Psoas muscle (tissue), 8 donors: ENCODE measurements at regions of chr20 and their contacts with region 1.

Region 1: DNA sequence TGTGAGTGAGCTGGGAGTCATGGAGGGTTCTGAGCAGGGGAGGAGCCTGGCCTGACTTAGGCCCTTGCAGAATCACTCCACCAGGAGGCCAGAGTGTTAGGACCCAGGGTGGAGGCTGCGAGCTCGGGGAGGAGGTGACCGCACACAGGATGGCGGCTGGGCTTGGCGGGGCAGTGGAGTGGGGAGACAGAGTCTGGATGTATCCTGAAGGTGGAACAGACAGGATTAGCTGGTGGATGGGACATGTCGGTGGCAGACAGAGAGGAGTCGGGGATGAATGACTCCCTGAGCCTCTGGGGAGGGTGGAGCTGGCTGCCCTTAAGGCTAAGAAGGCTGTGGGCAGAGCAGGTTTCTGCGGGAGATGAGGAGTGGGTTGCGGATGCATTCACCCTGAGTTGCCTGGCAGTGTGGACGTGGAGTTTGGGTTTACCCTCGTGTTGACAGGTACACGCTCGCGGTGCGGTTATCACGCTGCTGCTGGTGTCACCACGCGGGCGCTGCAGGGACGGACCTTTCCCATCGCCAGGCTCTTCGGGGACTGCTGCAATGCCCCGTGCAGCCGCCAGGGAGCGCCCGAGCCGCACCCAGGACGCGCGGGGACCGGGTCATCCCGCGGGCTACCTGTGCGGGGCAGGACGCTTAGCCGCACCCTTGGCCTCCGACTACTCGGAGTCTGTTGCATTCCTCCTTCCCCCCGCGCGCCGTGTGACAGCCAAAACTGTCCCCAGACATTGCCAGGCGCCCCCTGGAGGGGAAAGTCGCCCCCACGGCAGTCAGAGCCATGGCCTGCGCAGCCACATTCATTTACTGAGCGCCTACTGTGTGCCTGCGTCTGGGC is 43.0 kb upstream of the PTGIS start:
- DNase-seq: peak; percentile 80 to 89
- ATAC-seq: peak; percentile 69 to 81 (median 76)
- H3K4me3 ChIP-seq: peak overlapping the region; percentile 46
- H3K27ac ChIP-seq: peak overlapping the region; percentile 63
- H3K4me1 ChIP-seq: peaks cover 16% of the 10 kb centered on the region
- H3K27me3 ChIP-seq: peaks cover 0 to 4% (median 0%) of the 10 kb centered on the region in 3 donors
- CTCF ChIP-seq: peak; percentile 100

Region 2: GRCh38 chr20:49230561-49231193 is 380.2 kb before region 1 on chr20:
- intact Hi-C with region 1: no loop called
- DNase-seq: peak in 1 of 2 donors; percentile 40
- ATAC-seq: peak in 3 of 4 donors; percentile 29 to 83 (median 80)
- H3K4me3 ChIP-seq: no peak overlapping the region
- H3K27ac ChIP-seq: no peak overlapping the region
- H3K4me1 ChIP-seq: no peaks in the 10 kb centered on the region
- H3K27me3 ChIP-seq: no peaks in the 10 kb centered on the region
- CTCF ChIP-seq: no peak

Region 3: GRCh38 chr20:49338061-49338460 is 272.9 kb before region 1 on chr20:
- intact Hi-C with region 1: loop called in 1 of 2 experiments (anchors 2 kb)
- DNase-seq: no peak
- ATAC-seq: peak in 3 of 4 donors; percentile 68 to 84 (median 76)
- H3K4me3 ChIP-seq: no peak overlapping the region
- H3K27ac ChIP-seq: peak overlapping the region; percentile 13
- H3K4me1 ChIP-seq: peaks cover 4% of the 10 kb centered on the region
- H3K27me3 ChIP-seq: no peaks in the 10 kb centered on the region
- CTCF ChIP-seq: no peak

Region 4: DNA sequence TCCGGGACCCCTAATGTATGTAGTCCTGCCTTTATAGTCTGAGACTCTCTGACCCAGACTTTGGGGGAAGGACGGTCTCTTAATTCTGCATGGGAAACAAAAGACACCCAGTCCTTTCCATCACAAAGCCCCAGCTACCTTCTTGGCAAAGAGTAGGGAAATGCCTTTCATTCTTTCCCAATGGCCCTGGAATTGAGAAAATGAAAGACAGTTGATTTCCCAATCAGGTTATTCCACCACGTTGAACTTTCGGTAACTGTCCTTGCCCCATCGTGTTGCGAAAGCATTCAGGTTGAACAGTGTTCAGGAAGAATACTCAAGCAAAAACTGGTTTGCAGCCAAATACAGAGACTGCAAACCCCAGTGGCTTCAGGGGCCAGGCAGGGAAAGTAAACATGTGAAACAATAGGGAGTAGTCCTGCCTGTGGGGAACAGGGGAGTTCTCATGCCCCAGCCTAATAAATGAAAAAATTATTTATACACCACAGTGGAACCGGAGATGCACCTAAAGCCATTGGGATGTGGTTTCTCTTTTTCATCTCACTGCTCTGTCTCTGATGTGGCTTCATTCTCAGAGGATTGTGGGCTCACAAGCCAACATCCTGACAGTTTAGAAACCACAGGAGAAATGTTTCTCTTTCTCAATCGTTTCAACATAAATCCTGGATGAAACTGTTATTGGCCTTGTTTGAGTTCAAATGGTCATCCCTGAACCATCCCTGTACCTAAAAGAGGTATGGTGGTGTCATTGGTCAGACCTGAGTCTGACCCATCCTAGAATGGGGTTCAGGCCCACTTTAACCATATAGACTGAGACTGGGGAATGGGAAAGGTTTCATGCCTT is 157.5 kb after region 1 on chr20:
- intact Hi-C with region 1: loop called in 1 of 2 experiments (anchors 5 kb)
- DNase-seq: peak; percentile 69 to 72
- ATAC-seq: peak; percentile 65 to 74 (median 70)
- H3K4me3 ChIP-seq: no peak overlapping the region
- H3K27ac ChIP-seq: peak overlapping the region; percentile 71
- H3K4me1 ChIP-seq: peaks cover 38% of the 10 kb centered on the region
- H3K27me3 ChIP-seq: no peaks in the 10 kb centered on the region
- CTCF ChIP-seq: no peak

Region 5: DNA sequence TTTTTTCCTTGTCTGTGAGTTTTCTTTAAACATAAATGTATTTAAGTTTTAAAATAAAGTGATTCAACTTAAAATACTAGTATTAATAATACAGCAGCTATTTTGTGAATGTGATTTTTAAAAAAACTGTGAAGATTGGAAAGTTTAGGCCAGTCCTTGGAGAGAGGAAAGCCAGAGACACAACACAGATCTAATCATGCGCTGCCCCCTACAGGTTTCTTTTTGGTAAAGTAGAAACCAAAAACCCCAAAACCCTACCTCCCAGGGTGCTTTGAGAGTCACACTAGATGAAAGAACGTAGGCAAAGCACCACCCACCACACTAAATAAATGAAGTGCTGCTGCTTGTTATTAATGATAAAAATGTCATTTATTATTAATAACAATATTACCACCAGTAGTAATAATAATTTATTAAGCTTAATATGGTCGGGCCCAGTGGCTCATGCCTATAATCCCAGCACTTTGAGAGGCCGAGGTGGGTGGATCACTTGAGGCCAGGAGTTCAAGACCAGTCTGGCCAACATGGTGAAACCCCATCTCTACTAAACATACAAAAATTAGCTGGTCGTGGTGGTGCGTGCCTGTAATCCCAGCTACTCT is 235.4 kb after region 1 on chr20:
- intact Hi-C with region 1: loop called (anchors 2 to 5 kb)
- DNase-seq: no peak
- ATAC-seq: peak; percentile 66 to 76 (median 67)
- H3K4me3 ChIP-seq: no peak overlapping the region
- H3K27ac ChIP-seq: no peak overlapping the region
- H3K4me1 ChIP-seq: peaks cover 12% of the 10 kb centered on the region
- H3K27me3 ChIP-seq: no peaks in the 10 kb centered on the region
- CTCF ChIP-seq: peak; percentile 62

Region 6: DNA sequence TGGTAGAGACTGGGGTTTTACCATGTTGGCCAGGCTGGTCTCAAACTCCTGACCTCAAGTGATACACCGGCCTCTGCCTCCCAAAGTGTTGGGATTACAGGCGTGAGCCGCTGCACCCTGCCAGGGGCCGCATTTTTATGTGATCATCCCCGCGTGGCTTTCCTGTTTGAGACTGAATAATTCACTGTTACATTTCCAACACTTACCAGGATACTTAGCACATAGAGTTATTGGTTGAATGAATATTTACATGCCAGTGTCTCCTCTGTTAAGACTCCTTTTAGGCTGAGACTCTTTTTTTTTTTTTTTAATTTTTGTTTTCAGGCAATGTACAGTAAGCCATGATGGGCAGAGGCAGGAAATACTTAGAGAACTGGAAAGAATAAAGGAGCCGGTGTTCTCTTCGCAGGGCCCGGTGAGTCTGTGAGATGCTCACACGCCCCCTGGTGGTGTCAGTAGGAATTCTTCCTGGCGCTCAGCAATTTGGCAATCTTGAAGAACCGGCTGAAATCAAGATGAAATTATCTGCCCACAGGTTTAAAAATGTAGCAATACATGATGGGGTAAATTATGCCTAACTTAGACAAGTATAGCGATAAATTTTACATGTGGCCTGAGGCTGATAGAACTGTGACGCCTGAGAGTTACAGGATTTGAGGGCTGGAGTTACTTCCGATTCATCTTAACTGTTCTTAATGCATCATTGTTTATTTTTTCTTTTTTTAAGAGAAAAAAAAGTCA is 317.7 kb after region 1 on chr20:
- intact Hi-C with region 1: loop called (anchors 2 to 5 kb)
- DNase-seq: peak; percentile 78 to 85
- ATAC-seq: peak; percentile 86 to 92 (median 86)
- H3K4me3 ChIP-seq: no peak overlapping the region
- H3K27ac ChIP-seq: no peak overlapping the region
- H3K4me1 ChIP-seq: no peaks in the 10 kb centered on the region
- H3K27me3 ChIP-seq: no peaks in the 10 kb centered on the region
- CTCF ChIP-seq: peak; percentile 93